ENCODE measurements at regions of chr15 and their contacts with region 1.

Region 1: DNA sequence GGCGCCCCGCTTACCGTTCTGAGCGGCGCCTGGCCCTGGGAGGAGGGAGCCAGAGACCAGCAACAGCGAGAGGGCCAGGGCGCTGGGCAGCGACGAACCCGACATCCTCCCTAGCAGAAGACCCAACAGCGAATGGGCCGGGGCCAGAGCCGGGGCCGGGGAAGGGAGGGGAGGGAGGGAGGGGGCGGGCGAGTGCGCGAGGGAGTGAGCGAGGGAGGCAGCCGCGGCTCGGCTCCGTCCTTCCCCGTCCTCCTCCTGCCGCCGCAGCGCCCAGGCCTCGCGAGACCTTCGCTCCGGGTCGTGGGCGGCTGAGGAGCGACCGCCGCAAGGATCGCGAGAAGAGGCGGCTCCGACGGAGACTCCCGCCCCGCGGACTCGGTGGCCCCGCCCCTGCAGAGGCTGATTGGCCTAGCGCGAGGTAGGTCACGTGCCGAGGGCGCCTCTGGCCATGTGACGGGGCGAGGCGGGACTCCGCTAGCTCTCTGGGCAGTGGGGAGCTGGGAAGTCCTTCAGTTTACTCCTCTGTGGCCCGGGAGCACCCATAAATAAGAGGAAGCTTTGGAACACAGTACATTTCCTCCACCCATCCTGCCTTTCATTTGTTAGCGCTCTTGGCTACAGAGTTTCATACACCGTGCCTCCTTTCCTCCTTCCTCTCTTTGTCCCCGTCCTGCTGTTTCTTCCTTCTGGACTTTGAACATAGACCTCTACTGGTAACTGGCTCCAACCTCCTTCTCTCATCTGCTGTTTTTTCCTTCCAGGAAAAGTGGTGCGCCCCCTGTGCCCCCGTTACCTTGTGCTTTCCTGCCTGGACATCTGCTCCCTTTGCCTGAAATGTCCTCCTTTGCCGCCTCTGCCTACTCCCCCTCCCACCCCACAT is at the start of gene NPTN:
- DNase-seq: peak; percentile 98
- ATAC-seq: peak; percentile 94
- H3K4me3 Mint-ChIP-seq: peak within 1 kb of the TSS; percentile 75
- H3K27ac Mint-ChIP-seq: peak within 1 kb of the TSS; percentile 71
- H3K4me1 Mint-ChIP-seq: peaks cover 49% of the 10 kb centered on the region
- H3K27me3 Mint-ChIP-seq: peaks cover 12% of the 10 kb centered on the region
- CTCF ChIP-seq: no peak
- total RNA-seq, gene NPTN: 27.4 to 33.6 TPM

Region 2: GRCh38 chr15:73560501-73561117 is 72.7 kb before region 1 on chr15:
- CTCF ChIA-PET with region 1: interaction called, 55 read pairs
- POLR2A ChIA-PET with region 1: interaction called, 4 read pairs
- intact Hi-C with region 1: loop called (anchors 5 kb)
- DNase-seq: peak; percentile 26
- ATAC-seq: no peak
- H3K4me3 Mint-ChIP-seq: no peak overlapping the region
- H3K27ac Mint-ChIP-seq: no peak overlapping the region
- H3K4me1 Mint-ChIP-seq: peaks cover 5% of the 10 kb centered on the region
- H3K27me3 Mint-ChIP-seq: no peaks in the 10 kb centered on the region
- CTCF ChIP-seq: peak; percentile 52

Region 3: DNA sequence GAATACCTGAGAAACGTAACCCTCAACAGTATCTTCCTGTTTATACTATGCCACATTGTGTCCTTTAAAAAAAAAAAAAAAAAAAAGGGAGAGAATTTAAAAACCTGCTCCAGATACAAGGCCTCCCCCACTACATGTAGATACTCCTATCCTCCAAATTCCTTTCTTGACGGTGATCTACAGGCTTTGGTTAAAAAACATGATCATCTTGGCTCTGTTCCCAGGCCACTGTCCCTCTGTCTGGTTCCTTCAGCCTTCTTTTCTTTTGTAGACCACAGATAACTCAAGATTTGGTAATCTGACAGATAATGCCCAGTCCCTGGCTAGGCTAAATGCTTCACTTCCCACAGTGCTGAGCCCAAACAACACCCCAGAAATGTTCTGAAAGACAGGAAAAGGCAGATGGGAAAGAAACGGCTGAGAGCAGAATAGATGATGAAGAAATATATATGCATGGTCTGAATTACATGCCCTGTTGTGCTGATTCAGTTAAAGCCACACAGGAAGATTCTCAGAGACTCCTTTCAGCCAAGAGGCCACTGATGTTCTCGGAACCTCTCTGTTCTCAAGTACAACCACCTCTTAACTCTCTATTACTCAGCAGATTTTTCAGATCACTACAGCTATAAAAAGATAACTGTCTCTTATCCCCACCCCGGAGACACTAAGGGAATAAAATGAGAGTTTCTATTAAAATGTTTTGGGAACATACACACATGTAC is 48.5 kb before region 1 on chr15:
- CTCF ChIA-PET with region 1: interaction called, 10 read pairs
- POLR2A ChIA-PET with region 1: interaction called, 4 read pairs
- intact Hi-C with region 1: no loop called
- DNase-seq: no peak
- ATAC-seq: no peak
- H3K4me3 Mint-ChIP-seq: no peak overlapping the region
- H3K27ac Mint-ChIP-seq: peak overlapping the region; percentile 40
- H3K4me1 Mint-ChIP-seq: peaks cover 8% of the 10 kb centered on the region
- H3K27me3 Mint-ChIP-seq: no peaks in the 10 kb centered on the region
- CTCF ChIP-seq: no peak

Region 4: GRCh38 chr15:73608941-73609340 is 24.4 kb before region 1 on chr15:
- CTCF ChIA-PET with region 1: interaction called, 66 read pairs
- POLR2A ChIA-PET with region 1: interaction called, 3 read pairs
- intact Hi-C with region 1: no loop called
- DNase-seq: no peak
- ATAC-seq: no peak
- H3K4me3 Mint-ChIP-seq: no peak overlapping the region
- H3K27ac Mint-ChIP-seq: no peak overlapping the region
- H3K4me1 Mint-ChIP-seq: peaks cover 56% of the 10 kb centered on the region
- H3K27me3 Mint-ChIP-seq: no peaks in the 10 kb centered on the region
- CTCF ChIP-seq: no peak

Region 5: GRCh38 chr15:73650416-73651126 is 17.2 kb after region 1 on chr15:
- CTCF ChIA-PET with region 1: interaction called, 36 read pairs
- POLR2A ChIA-PET with region 1: no interaction called
- intact Hi-C with region 1: no loop called
- DNase-seq: peak; percentile 35
- ATAC-seq: peak; percentile 86
- H3K4me3 Mint-ChIP-seq: no peak overlapping the region
- H3K27ac Mint-ChIP-seq: peak overlapping the region; percentile 75
- H3K4me1 Mint-ChIP-seq: peaks cover 19% of the 10 kb centered on the region
- H3K27me3 Mint-ChIP-seq: peaks cover 19% of the 10 kb centered on the region
- CTCF ChIP-seq: no peak

Region 6: GRCh38 chr15:73677146-73677607 is 43.8 kb after region 1 on chr15:
- CTCF ChIA-PET with region 1: interaction called, 54 read pairs
- POLR2A ChIA-PET with region 1: no interaction called
- intact Hi-C with region 1: no loop called
- DNase-seq: peak; percentile 59
- ATAC-seq: peak; percentile 79
- H3K4me3 Mint-ChIP-seq: no peak overlapping the region
- H3K27ac Mint-ChIP-seq: no peak overlapping the region
- H3K4me1 Mint-ChIP-seq: peaks cover 8% of the 10 kb centered on the region
- H3K27me3 Mint-ChIP-seq: peaks cover 30% of the 10 kb centered on the region
- CTCF ChIP-seq: peak; percentile 85

Region 7: DNA sequence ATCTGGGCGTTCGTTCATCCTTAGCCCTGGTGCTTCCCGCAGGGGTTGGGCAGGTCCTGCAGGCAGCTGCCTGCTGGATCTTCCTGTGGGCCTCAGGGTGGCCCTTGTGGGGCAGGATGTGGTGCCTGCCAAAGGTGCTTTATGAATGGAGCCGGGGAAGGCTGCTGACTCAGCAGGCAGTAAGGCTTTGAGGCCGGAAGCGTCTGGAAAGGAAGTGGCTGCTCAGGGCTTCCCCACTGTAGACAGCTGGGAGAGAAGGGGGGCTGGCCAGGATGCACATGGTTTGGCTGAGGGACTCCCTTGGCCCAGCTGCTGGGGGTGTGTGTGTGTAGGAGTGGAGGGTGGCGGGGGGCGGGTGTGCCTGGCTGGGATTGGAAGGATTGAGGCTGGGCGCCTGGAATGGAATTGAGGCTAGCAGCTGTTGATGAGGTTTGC is 63.7 kb after region 1 on chr15:
- CTCF ChIA-PET with region 1: interaction called, 349 read pairs
- POLR2A ChIA-PET with region 1: no interaction called
- intact Hi-C with region 1: loop called (anchors 5 kb)
- DNase-seq: peak; percentile 92
- ATAC-seq: peak; percentile 93
- H3K4me3 Mint-ChIP-seq: no peak overlapping the region
- H3K27ac Mint-ChIP-seq: no peak overlapping the region
- H3K4me1 Mint-ChIP-seq: peaks cover 19% of the 10 kb centered on the region
- H3K27me3 Mint-ChIP-seq: peaks cover 58% of the 10 kb centered on the region
- CTCF ChIP-seq: no peak

Region 8: GRCh38 chr15:73789521-73790240 is 156.3 kb after region 1 on chr15:
- CTCF ChIA-PET with region 1: no interaction called
- POLR2A ChIA-PET with region 1: no interaction called
- intact Hi-C with region 1: no loop called
- DNase-seq: no peak
- ATAC-seq: no peak
- H3K4me3 Mint-ChIP-seq: no peak overlapping the region
- H3K27ac Mint-ChIP-seq: no peak overlapping the region
- H3K4me1 Mint-ChIP-seq: no peaks in the 10 kb centered on the region
- H3K27me3 Mint-ChIP-seq: no peaks in the 10 kb centered on the region
- CTCF ChIP-seq: no peak